Dendritic cell treated with granulocyte-macrophage colony-stimulating factor and Interleukin-4, amounts not matched to agents 40 ng/mL and 50 ng/mL, for 4 days (primary cell): ENCODE measurements at regions of chr17 and their contacts with region 1.

Region 1: DNA sequence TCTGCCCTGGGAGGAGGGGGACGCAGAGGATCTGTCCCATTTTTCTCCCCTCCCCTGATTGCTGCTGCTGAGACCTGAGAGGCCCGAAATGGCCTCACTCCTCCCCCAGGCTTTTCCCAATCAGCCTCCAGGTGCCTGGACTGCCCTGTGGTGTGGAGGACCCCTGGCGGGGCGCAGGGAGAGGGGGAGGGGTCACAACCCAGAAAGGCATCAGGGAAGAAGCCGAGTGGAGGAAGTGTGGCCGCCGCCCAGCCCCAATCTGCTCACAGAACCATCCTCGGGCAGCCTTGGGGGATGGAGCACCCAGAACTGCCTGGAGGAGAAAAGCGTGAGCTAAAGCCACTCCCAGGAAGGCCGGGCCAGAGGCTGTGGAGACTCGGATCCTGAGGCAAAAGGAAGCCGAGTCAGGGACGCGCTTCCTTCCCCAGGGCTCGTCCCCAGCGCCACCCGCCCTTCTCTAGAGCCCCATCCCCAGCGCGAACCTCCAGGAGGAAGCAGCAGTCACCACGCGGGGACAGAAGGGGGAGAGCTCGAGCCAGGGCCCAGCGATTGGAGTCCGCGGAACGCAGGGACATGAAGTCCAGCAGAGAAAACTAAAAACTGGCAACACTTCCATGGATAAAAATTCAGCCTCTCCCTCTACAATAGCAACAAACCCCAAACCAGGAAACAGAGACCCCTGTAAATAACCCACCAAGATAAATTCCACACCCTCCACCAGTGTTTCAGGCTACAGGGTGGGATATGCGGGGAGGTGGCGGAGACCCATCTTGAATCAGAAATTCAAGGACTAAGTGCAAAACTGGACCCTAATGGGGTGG is 116.3 kb upstream of the METRNL start:
- H3K4me3 Mint-ChIP-seq: peak overlapping the region; percentile 62
- H3K27ac Mint-ChIP-seq: peak overlapping the region; percentile 79
- H3K4me1 Mint-ChIP-seq: peaks cover 31% of the 10 kb centered on the region
- H3K27me3 Mint-ChIP-seq: no peaks in the 10 kb centered on the region

Region 2: DNA sequence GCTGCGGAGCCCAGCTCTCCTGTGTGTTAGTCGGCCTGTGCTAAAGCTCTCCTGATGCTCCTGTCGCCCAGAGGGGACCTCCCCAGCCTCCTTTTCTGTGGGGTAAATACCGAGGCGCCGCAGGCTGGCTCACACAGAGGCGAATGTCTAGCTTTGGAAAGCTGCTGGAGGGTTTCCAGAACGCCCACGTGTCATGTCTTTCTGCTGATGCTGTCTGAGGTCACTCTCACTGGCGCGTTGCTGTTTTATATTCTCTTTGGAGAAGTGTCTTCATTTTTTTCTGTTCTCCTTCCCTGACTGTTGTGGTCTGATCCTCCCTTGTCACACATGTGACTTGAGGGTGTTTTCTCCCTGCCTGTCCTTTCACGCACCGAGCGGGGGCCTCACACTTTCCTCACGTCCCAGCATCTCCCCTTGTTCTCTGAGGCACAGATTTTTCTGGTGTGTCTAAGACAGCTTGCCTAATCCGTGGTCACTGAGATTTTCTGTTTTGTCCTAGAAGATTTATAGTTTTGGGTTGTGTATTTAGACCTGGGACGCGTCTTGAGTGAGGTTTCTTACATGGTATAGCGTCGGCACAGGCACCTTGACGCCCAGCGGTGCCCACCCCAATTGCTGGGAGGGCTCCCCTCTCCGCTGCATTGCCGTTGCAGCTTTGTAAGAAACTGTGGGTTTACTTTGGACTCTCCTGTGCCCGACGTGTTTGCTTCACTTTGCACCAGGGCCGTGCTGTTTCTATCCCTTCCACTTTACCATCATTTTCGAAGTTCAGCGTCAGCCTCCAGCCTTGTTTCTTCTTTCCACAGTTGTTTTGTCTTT is 31.2 kb before region 1 on chr17:
- intact Hi-C with region 1: no loop called
- H3K4me3 Mint-ChIP-seq: no peak overlapping the region
- H3K27ac Mint-ChIP-seq: peak overlapping the region; percentile 36
- H3K4me1 Mint-ChIP-seq: peaks cover 10% of the 10 kb centered on the region
- H3K27me3 Mint-ChIP-seq: no peaks in the 10 kb centered on the region

Region 3: GRCh38 chr17:83024218-83024971 is 61.3 kb after region 1 on chr17:
- intact Hi-C with region 1: no loop called
- H3K4me3 Mint-ChIP-seq: no peak overlapping the region
- H3K27ac Mint-ChIP-seq: no peak overlapping the region
- H3K4me1 Mint-ChIP-seq: peaks cover 12% of the 10 kb centered on the region
- H3K27me3 Mint-ChIP-seq: no peaks in the 10 kb centered on the region

Region 4: DNA sequence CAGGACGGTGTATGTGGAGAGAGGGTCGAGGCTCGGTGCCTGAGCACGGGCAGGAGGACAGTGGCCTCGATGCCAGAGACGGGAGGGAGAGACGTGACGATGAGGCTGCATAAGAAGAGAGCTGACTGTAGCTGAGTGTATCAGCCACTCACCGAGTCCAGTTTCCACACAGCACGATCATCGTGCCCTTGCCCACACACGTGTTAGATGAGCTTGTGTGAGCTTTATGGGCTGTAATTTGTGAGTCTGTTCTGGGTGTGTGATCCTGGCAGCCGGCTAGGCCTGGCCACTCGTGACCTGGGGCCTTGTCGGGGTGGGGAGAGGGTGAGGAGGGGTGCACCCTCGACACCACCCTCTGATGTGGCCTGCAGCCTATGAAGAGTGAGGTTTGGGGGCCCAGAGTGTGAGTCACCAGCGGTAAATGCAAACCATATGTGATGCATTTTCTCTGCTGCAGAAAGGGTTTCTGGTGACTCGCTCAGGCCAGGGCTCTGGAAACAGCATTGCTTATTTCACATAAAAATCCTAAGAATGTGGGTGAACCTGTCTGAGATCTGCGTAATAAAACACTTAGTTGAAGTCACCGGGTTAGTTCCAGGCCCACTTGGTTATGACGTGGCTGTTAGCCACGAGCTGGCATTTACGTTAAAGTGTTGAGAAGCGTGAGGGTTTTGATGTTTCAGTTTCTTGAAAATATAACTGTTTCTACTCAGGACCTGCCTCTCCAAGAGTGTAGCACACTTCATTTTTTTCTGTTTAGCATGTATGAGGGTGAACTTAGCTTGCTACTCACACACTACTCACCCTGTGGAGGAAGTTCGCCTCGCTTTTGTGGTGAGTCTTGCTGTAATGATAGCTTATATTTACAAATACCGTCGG is 120.5 kb after region 1 on chr17:
- intact Hi-C with region 1: loop called (anchors 5 kb)
- H3K4me3 Mint-ChIP-seq: peak overlapping the region; percentile 89
- H3K27ac Mint-ChIP-seq: peak overlapping the region; percentile 72
- H3K4me1 Mint-ChIP-seq: peaks cover 72% of the 10 kb centered on the region
- H3K27me3 Mint-ChIP-seq: peaks cover 2% of the 10 kb centered on the region